HEK293 (cell line): ENCODE measurements at regions of chr7 and their contacts with region 1.

Region 1: DNA sequence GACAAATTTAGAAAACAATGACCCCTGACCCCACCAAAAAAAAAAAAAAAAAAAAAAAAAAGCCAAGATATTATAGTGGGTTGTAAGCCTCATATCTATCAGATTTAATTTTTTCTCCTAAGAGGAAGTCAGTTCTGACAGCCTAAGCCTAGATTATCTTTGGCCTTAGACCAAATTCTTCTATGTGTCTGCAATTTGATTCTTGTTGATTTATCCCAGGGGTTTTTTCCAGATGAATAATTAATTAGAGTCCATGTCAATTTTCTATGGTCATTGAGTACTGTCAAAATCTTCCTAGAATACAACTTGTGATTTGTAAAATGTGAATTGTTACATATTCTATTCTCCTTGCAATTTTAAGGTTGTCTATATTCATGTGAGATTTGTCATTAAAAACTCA is 151.6 kb upstream of the CACNA2D1 start:
- H3K4me3 ChIP-seq: no peak overlapping the region
- H3K27ac ChIP-seq: no peak overlapping the region
- H3K4me1 ChIP-seq: peaks cover 19% of the 10 kb centered on the region; the same call in 1 of the 2 replicates
- CTCF ChIP-seq: no peak

Region 2: DNA sequence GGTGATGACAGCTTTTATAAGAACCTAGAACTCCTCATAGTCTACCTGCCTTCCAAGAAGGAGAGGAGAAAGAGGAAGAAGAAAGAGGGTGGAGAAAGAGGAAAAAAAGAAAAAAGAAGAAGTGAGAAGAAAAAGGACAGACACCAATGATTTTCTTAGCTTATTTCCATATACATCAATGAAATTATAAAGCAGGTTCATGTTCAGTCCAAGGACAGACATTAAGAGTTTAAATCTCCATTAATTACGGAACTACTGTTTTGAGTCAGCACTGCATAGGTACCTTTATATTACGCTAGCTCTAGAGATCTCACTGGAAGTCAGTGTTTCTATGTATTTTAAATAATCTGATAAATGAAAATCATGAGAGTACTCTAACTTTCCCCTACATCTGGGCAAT is 516.4 kb before region 1 on chr7:
- CTCF ChIA-PET with region 1: interaction called, 10 read pairs
- POLR2A ChIA-PET with region 1: no interaction called
- H3K4me3 ChIP-seq: no peak overlapping the region
- H3K27ac ChIP-seq: no peak overlapping the region
- H3K4me1 ChIP-seq: no peaks in the 10 kb centered on the region
- CTCF ChIP-seq: no peak

Region 3: DNA sequence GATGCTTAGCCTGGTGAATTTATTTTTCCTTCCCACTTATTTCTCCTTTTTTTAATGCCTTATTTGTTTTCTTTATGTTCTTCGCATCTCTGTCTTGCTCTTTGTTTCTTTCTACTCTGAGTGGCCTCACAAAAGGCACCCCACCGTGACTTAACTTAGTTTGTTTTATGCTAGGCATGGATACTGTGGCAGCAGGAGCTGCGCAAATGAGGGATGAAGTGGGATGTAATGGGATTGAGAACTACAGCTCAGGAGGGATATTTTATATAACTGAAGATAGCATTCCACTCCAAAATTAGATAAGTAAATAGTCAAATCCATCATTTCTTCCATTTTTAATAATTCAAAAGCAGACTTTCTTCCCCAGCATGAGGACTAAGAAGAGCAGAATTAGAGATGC is 149.9 kb before region 1 on chr7:
- CTCF ChIA-PET with region 1: no interaction called
- POLR2A ChIA-PET with region 1: no interaction called
- H3K4me3 ChIP-seq: no peak overlapping the region
- H3K27ac ChIP-seq: no peak overlapping the region
- H3K4me1 ChIP-seq: peaks cover 7% of the 10 kb centered on the region
- CTCF ChIP-seq: no peak